CD4-positive, alpha-beta memory T cell (primary cell): ENCODE measurements at regions of chr5 and their contacts with region 1.

Region 1: GRCh38 chr5:10441083-10441991 is at the start of gene ROPN1L:
- DNase-seq: peak; percentile 75 to 83 (median 78)
- H3K4me3 ChIP-seq: peak within 1 kb of the TSS; percentile 71 to 89
- H3K4me3 Mint-ChIP-seq: peak within 1 kb of the TSS; percentile 86 to 90 (median 86)
- H3K27ac ChIP-seq: peak within 1 kb of the TSS; percentile 53
- H3K27ac Mint-ChIP-seq: peak within 1 kb of the TSS; percentile 22 to 85 (median 70)
- H3K4me1 ChIP-seq: peaks cover 45% of the 10 kb centered on the region
- H3K4me1 Mint-ChIP-seq: peaks cover 37 to 51% (median 38%) of the 10 kb centered on the region in 4 donors
- H3K27me3 ChIP-seq: no peaks in the 10 kb centered on the region
- H3K27me3 Mint-ChIP-seq: no peaks in the 10 kb centered on the region
- total RNA-seq, gene ROPN1L: 0.42 to 0.47 TPM

Region 2: DNA sequence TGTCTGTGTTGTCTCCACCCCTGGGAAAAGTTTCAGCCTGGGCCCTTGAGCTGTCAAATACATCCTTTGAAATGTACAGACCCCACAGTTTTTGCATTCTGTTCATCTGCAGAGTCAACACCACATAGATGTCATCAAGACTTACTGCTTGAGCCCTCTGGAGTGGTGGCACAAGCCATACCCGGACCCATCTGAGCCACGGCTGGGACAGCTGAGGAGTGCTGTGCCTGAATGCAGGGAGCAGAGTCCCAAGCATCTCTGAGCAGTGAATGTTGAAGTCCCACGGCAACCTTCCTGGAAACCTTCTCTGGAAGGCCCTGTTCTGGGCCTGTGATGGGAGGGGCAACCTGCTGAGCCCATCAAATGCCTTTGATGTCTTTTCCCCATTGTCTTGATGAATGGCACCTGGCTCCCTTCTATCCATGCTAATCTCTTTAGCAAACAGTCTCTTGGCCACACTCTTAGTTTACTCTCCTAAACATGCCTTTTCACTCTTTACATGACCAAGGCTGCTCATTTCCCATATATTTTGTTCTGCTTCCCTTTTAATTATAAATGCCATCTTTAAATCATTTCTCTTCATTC is 284.2 kb before region 1 on chr5:
- CTCF ChIA-PET with region 1: no interaction called
- POLR2A ChIA-PET with region 1: no interaction called
- intact Hi-C with region 1: no loop called
- DNase-seq: no peak
- H3K4me3 ChIP-seq: no peak overlapping the region
- H3K4me3 Mint-ChIP-seq: no peak overlapping the region
- H3K27ac ChIP-seq: no peak overlapping the region
- H3K27ac Mint-ChIP-seq: peak overlapping the region in 1 of 7 donors; percentile 11
- H3K4me1 ChIP-seq: no peaks in the 10 kb centered on the region
- H3K4me1 Mint-ChIP-seq: no peaks in the 10 kb centered on the region
- H3K27me3 ChIP-seq: no peaks in the 10 kb centered on the region
- H3K27me3 Mint-ChIP-seq: peaks cover 3 to 9% of the 10 kb centered on the region in 2 donors

Region 3: GRCh38 chr5:10353241-10354047 is 87.9 kb before region 1 on chr5 and contains the start of gene MARCHF6:
- CTCF ChIA-PET with region 1: no interaction called
- POLR2A ChIA-PET with region 1: interaction called, 7 read pairs
- intact Hi-C with region 1: loop called (anchors 1 kb)
- DNase-seq: peak; percentile 94 to 97 (median 94)
- H3K4me3 ChIP-seq: peak within 1 kb of the TSS; percentile 85
- H3K4me3 Mint-ChIP-seq: peak within 1 kb of the TSS; percentile 93 to 100 (median 99)
- H3K27ac ChIP-seq: peak within 1 kb of the TSS; percentile 83
- H3K27ac Mint-ChIP-seq: peak within 1 kb of the TSS; percentile 95 to 100 (median 99)
- H3K4me1 ChIP-seq: peaks cover 49% of the 10 kb centered on the region
- H3K4me1 Mint-ChIP-seq: peaks cover 27 to 54% (median 35%) of the 10 kb centered on the region in 4 donors
- H3K27me3 ChIP-seq: no peaks in the 10 kb centered on the region
- H3K27me3 Mint-ChIP-seq: no peaks in the 10 kb centered on the region
- total RNA-seq, gene MARCHF6: 195 to 203 TPM

Region 4: DNA sequence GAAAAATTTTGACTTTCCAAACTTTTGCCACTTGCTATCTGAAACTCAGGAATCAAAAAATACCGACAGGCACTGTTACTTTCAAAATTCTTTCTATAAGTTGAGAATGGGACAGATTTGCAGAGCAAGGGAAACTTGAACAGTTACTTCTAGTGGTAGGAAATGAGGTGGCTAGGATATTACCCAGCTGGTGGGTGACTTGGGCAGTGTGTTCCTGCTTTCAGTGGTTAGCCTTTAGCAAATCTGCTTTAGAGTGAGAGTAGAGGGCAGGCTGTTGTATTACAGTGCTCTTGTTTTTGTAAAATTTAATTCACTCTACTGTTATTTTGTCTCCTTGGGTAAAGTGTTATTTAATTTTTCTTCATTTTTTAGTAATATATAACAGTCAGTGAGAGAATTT is 39.8 kb before region 1 on chr5:
- CTCF ChIA-PET with region 1: no interaction called
- POLR2A ChIA-PET with region 1: no interaction called
- intact Hi-C with region 1: loop called (anchors 5 kb)
- DNase-seq: no peak
- H3K4me3 ChIP-seq: no peak overlapping the region
- H3K4me3 Mint-ChIP-seq: no peak overlapping the region
- H3K27ac ChIP-seq: no peak overlapping the region
- H3K27ac Mint-ChIP-seq: peak overlapping the region in 2 of 7 donors; percentile 34 to 41
- H3K4me1 ChIP-seq: no peaks in the 10 kb centered on the region
- H3K4me1 Mint-ChIP-seq: peaks cover 0 to 4% (median under 1%) of the 10 kb centered on the region in 4 donors
- H3K27me3 ChIP-seq: no peaks in the 10 kb centered on the region
- H3K27me3 Mint-ChIP-seq: no peaks in the 10 kb centered on the region

Region 5: GRCh38 chr5:10452768-10453331 is 11.5 kb after region 1 on chr5:
- CTCF ChIA-PET with region 1: interaction called, 17 read pairs
- POLR2A ChIA-PET with region 1: interaction called, 6 read pairs
- intact Hi-C with region 1: no loop called
- DNase-seq: peak in 4 of 5 donors; percentile 52 to 60 (median 58)
- H3K4me3 ChIP-seq: no peak overlapping the region
- H3K4me3 Mint-ChIP-seq: no peak overlapping the region
- H3K27ac ChIP-seq: no peak overlapping the region
- H3K27ac Mint-ChIP-seq: no peak overlapping the region
- H3K4me1 ChIP-seq: no peaks in the 10 kb centered on the region
- H3K4me1 Mint-ChIP-seq: peaks cover 6 to 23% (median 11%) of the 10 kb centered on the region in 4 donors
- H3K27me3 ChIP-seq: no peaks in the 10 kb centered on the region
- H3K27me3 Mint-ChIP-seq: no peaks in the 10 kb centered on the region